Activated B cell treated with CpG ODN at 0.5 μM for 24 hours (primary cell): ENCODE measurements at regions of chr15 and their contacts with region 1.

Region 1: DNA sequence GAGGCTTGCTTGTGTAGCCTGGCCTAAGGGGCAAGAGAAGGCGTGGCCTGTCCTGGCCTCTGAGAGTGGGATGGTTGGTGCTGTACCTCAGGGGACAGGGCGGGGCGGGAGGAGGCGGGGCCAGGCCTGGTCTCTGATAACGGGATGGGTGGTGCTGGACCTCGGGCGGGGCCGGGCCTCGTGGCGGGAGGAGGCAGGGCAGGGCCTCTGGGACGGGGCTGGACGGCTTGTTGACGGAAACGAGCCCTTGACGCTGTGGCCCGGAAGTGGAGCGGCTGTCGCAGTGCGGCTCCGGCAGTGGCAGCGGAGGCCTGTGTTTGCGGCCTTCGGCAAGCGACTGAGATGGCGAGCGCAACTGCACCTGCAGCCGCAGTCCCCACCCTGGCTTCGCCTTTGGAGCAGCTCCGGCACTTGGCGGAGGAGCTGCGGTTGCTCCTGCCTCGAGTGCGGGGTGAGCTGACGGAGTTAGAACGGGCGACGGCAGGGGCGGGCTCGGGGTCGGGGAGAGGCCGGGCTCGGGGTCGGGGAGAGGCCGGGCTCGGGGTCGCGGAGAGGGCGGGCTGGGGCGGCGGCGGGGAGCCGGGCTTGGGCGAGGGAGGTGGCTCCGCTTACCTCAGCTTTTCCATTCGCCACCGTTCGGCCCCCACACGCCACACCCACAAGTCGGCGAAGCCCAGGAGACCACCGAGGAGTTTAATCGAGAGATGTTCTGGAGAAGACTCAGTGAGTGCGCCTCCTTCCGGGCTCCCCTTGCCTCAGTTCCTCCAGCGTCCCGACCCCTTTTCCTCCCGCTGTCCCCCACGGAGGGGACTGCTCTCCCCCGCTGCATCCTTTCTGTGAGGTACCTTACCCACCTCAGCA is at the start of gene CCNDBP1:
- DNase-seq: peak; percentile 85
- ATAC-seq: peak; percentile 93
- H3K4me3 Mint-ChIP-seq: peak within 1 kb of the TSS; percentile 97
- H3K27ac Mint-ChIP-seq: peak within 1 kb of the TSS; percentile 96
- H3K4me1 Mint-ChIP-seq: peaks cover 32% of the 10 kb centered on the region
- H3K27me3 Mint-ChIP-seq: no peaks in the 10 kb centered on the region
- CTCF ChIP-seq: no peak
- total RNA-seq, gene CCNDBP1: 65.6 and 67.2 TPM in 2 replicates

Region 2: DNA sequence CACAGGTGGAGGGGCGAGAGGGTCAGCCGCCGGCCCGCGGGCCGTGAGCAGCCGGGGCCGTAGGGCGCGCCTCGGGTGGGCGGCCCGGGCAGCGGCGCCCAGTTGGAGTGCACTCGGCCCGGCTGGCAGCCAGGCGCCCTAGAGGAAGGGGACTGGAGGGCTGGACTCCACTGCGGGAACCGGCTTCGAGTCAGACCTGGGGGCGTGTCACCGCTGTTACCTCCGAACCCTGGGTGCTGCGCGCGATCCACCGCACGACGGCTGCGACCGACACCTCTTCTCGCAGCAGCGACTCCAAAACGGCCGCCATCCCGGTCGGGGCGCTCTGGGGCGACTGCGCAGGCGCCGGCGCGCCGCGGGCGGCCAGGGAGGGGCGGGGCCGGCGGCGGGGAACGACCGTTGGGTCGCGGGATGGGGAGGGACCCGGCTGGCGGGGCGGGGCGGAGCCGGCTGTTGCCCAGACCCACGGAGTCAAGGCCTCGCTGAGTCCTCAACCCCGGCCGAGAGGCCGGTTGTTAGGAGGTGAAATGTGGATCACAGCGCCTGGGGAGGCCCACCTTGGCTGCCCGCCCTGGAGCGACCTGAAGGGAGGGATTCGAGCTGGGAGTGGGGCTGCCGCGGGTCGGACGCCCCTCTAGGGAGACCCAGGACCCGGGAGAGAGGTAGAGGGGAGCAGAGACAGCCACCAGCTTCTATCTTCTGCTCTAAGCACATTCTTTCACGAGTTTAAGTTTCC is 448.4 kb before region 1 on chr15 and contains the start of gene CDAN1:
- CTCF ChIA-PET with region 1: no interaction called
- POLR2A ChIA-PET with region 1: no interaction called
- intact Hi-C with region 1: loop called (anchors 1 kb)
- DNase-seq: peak; percentile 92
- ATAC-seq: peak; percentile 96
- H3K4me3 Mint-ChIP-seq: peak within 1 kb of the TSS; percentile 83
- H3K27ac Mint-ChIP-seq: peak within 1 kb of the TSS; percentile 61
- H3K4me1 Mint-ChIP-seq: peaks cover 13% of the 10 kb centered on the region
- H3K27me3 Mint-ChIP-seq: no peaks in the 10 kb centered on the region
- CTCF ChIP-seq: no peak
- total RNA-seq, gene CDAN1: 14.6 and 15.6 TPM in 2 replicates

Region 3: DNA sequence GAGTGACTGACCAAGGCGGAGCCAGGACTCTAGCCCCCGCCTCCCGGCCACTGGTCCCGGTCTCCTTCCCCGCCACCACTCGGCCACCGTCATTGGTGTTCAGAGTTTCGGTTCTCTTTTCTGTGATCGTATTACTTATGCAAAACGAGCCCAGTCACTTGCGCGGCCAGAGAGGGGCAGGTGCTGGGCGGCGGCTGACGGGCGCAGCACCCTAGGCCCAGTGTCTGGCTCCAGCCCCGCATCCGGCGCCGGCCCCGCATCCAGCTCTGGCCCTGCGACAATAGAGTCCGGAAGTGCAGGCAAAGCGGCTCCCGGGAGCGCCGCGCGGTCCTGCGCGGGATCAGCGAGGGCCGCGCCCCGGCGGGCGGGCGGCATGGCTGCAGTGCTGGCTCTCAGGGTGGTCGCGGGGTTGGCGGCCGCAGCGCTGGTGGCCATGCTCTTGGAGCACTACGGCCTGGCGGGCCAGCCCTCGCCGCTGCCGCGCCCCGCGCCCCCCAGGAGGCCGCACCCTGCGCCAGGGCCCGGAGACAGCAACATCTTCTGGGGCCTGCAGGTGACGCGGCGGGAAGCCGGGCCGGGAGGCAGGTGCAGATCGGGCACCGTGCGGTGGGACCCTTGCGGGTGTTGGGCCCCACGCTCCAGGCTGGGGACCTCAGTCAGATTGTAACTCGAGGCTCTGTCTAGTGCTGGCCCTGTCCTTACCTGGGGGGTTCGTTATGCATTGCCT is 51.8 kb before region 1 on chr15 and contains the start of gene TMEM62:
- CTCF ChIA-PET with region 1: no interaction called
- POLR2A ChIA-PET with region 1: interaction called, 7 read pairs
- intact Hi-C with region 1: loop called (anchors 1 kb)
- DNase-seq: peak; percentile 74
- ATAC-seq: peak; percentile 92
- H3K4me3 Mint-ChIP-seq: peak within 1 kb of the TSS; percentile 89
- H3K27ac Mint-ChIP-seq: peak within 1 kb of the TSS; percentile 86
- H3K4me1 Mint-ChIP-seq: peaks cover 31% of the 10 kb centered on the region
- H3K27me3 Mint-ChIP-seq: no peaks in the 10 kb centered on the region
- CTCF ChIP-seq: no peak
- total RNA-seq, gene TMEM62: 38.3 and 52.2 TPM in 2 replicates

Region 4: GRCh38 chr15:43285609-43286037 is 100.2 kb after region 1 on chr15:
- CTCF ChIA-PET with region 1: interaction called, 16 read pairs
- POLR2A ChIA-PET with region 1: no interaction called
- intact Hi-C with region 1: loop called (anchors 1 kb)
- DNase-seq: no peak
- ATAC-seq: peak; percentile 75
- H3K4me3 Mint-ChIP-seq: no peak overlapping the region
- H3K27ac Mint-ChIP-seq: no peak overlapping the region
- H3K4me1 Mint-ChIP-seq: peaks cover 14% of the 10 kb centered on the region
- H3K27me3 Mint-ChIP-seq: peaks cover 2% of the 10 kb centered on the region
- CTCF ChIP-seq: peak; percentile 56

Region 5: GRCh38 chr15:43370975-43371974 is 185.9 kb after region 1 on chr15 and contains the starts of genes TUBGCP4 and ZSCAN29:
- CTCF ChIA-PET with region 1: no interaction called
- POLR2A ChIA-PET with region 1: interaction called, 3 read pairs
- intact Hi-C with region 1: loop called (anchors 2 kb)
- DNase-seq: peak; percentile 83
- ATAC-seq: peak; percentile 82
- H3K4me3 Mint-ChIP-seq: peak within 1 kb of the TSS; percentile 93
- H3K27ac Mint-ChIP-seq: peak within 1 kb of the TSS; percentile 87
- H3K4me1 Mint-ChIP-seq: peaks cover 58% of the 10 kb centered on the region
- H3K27me3 Mint-ChIP-seq: no peaks in the 10 kb centered on the region
- CTCF ChIP-seq: no peak
- total RNA-seq, gene TUBGCP4: 24.0 and 31.2 TPM in 2 replicates
- total RNA-seq, gene ZSCAN29: 45.6 and 50.6 TPM in 2 replicates